Mammary epithelial cell (primary cell): ENCODE measurements at regions of chr9 and their contacts with region 1.

Region 1: GRCh38 chr9:100341889-100342288 is 10.9 kb downstream of the TEX10 start:
- DNase-seq: no peak
- H3K4me3 ChIP-seq: no peak overlapping the region
- H3K27ac ChIP-seq: no peak overlapping the region
- H3K4me1 ChIP-seq: no peaks in the 10 kb centered on the region
- H3K27me3 ChIP-seq: no peaks in the 10 kb centered on the region
- CTCF ChIP-seq: no peak

Region 2: GRCh38 chr9:100167915-100168654 is 173.8 kb before region 1 on chr9:
- CTCF ChIA-PET with region 1: no interaction called
- dilution Hi-C with region 1: no loop called
- in situ Hi-C with region 1: no loop called
- intact Hi-C with region 1: no loop called
- DNase-seq: no peak
- H3K4me3 ChIP-seq: no peak overlapping the region
- H3K27ac ChIP-seq: no peak overlapping the region
- H3K4me1 ChIP-seq: peaks cover 4% of the 10 kb centered on the region
- H3K27me3 ChIP-seq: no peaks in the 10 kb centered on the region
- CTCF ChIP-seq: peak in 1 of 2 donors; percentile 20

Region 3: GRCh38 chr9:100486479-100487176 is 144.7 kb after region 1 on chr9:
- CTCF ChIA-PET with region 1: no interaction called
- dilution Hi-C with region 1: no loop called
- in situ Hi-C with region 1: no loop called
- intact Hi-C with region 1: no loop called
- DNase-seq: no peak
- H3K4me3 ChIP-seq: no peak overlapping the region
- H3K27ac ChIP-seq: no peak overlapping the region
- H3K4me1 ChIP-seq: no peaks in the 10 kb centered on the region
- H3K27me3 ChIP-seq: no peaks in the 10 kb centered on the region
- CTCF ChIP-seq: no peak

Region 4: GRCh38 chr9:100589582-100589981 is 247.7 kb after region 1 on chr9:
- CTCF ChIA-PET with region 1: no interaction called
- dilution Hi-C with region 1: loop called (anchors 10 kb)
- in situ Hi-C with region 1: loop called (anchors 10 to 25 kb)
- intact Hi-C with region 1: no loop called
- DNase-seq: peak; percentile 37
- H3K4me3 ChIP-seq: no peak overlapping the region
- H3K27ac ChIP-seq: no peak overlapping the region
- H3K4me1 ChIP-seq: peaks cover 7% of the 10 kb centered on the region
- H3K27me3 ChIP-seq: no peaks in the 10 kb centered on the region
- CTCF ChIP-seq: no peak